Activated B cell treated with CpG ODN at 0.5 μM for 24 hours (primary cell): ENCODE measurements at regions of chr19 and their contacts with region 1.

Region 1: DNA sequence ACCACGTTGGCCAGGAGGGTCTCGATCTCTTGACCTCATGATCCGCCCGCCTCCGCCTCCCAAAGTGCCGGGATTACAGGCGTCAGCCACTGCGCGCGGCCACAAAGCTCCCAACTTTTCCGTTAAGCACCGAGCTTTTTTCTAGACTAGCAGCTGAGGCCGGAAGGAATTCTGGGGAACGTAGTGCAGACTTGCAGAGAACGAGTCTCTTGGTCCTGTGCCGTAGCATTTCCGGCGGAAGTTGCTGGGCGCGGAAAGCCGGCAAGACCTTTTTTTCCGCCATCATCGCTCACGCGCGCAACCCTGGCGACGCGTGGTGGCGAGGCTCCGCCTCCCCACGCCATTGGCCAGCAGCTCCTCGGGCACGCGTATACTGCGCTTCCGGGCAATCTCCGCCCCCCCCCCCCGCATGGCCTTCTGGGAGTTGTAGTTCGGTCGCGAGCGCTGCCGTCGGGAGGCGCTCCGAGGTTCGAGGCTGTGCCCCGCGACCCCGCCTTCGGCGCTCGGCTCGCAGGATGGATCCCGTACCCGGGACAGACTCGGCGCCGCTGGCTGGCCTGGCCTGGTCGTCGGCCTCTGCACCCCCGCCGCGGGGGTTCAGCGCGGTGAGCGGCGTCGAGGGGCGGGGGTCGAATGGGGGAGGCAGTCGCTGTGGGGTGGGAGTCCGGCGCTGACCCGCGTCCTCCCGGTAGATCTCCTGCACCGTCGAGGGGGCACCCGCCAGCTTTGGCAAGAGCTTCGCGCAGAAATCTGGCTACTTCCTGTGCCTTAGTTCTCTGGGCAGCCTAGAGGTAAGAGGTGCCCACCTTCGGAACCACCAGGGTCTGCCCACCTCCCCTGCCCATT is at the start of gene MVB12A:
- DNase-seq: peak; percentile 91
- ATAC-seq: peak; percentile 97
- H3K4me3 Mint-ChIP-seq: peak within 1 kb of the TSS; percentile 95
- H3K27ac Mint-ChIP-seq: peak within 1 kb of the TSS; percentile 93
- H3K4me1 Mint-ChIP-seq: peaks cover 16% of the 10 kb centered on the region
- H3K27me3 Mint-ChIP-seq: no peaks in the 10 kb centered on the region
- CTCF ChIP-seq: no peak
- total RNA-seq, gene MVB12A: 22.8 and 23.3 TPM in 2 replicates

Region 2: GRCh38 chr19:17336872-17337722 is 82.7 kb before region 1 on chr19 and contains the start of gene GTPBP3:
- CTCF ChIA-PET with region 1: no interaction called
- POLR2A ChIA-PET with region 1: interaction called, 5 read pairs
- intact Hi-C with region 1: loop called (anchors 1 kb)
- DNase-seq: peak; percentile 87
- ATAC-seq: peak; percentile 88
- H3K4me3 Mint-ChIP-seq: peak within 1 kb of the TSS; percentile 90
- H3K27ac Mint-ChIP-seq: peak within 1 kb of the TSS; percentile 89
- H3K4me1 Mint-ChIP-seq: peaks cover 36% of the 10 kb centered on the region
- H3K27me3 Mint-ChIP-seq: no peaks in the 10 kb centered on the region
- CTCF ChIP-seq: no peak
- total RNA-seq, gene GTPBP3: 32.4 and 40.2 TPM in 2 replicates

Region 3: DNA sequence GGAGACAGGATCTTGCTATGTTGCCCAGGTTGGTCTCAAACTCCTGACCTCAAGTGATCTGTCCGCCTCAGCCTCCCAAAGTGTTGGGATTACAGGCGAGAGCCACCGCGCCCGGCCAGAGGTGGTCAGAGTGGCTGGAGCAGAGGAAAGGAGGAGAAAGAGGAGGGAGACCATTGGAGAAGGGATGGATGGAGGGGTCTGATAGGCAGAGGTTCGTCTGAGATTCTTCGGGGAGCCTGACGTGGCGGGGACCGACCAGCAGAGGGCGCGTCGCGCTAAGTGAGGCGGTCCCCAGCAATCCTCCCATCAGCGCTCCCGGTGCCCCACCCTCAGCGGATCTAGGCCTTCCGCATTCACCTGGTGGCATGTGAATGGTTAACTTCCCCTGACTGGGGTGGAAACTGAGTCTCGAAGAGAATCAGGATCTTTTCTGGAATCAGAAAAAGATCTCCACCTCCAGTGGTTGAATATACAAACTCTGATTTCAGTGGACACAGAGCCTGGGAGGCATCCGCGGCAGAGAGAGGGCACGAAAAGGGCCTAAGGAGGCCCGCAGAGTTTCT is 73.7 kb before region 1 on chr19:
- CTCF ChIA-PET with region 1: no interaction called
- POLR2A ChIA-PET with region 1: no interaction called
- intact Hi-C with region 1: loop called (anchors 1 kb)
- DNase-seq: peak; percentile 79
- ATAC-seq: peak; percentile 98
- H3K4me3 Mint-ChIP-seq: no peak overlapping the region
- H3K27ac Mint-ChIP-seq: no peak overlapping the region
- H3K4me1 Mint-ChIP-seq: peaks cover 6% of the 10 kb centered on the region
- H3K27me3 Mint-ChIP-seq: peaks cover 15% of the 10 kb centered on the region
- CTCF ChIP-seq: peak; percentile 84

Region 4: GRCh38 chr19:17405250-17406038 is 14.4 kb before region 1 on chr19 and contains the start of gene BST2:
- CTCF ChIA-PET with region 1: interaction called, 5 read pairs
- POLR2A ChIA-PET with region 1: interaction called, 60 read pairs
- intact Hi-C with region 1: loop called (anchors 1 kb)
- DNase-seq: peak; percentile 42
- ATAC-seq: peak; percentile 86
- H3K4me3 Mint-ChIP-seq: peak within 1 kb of the TSS; percentile 92
- H3K27ac Mint-ChIP-seq: peak within 1 kb of the TSS; percentile 93
- H3K4me1 Mint-ChIP-seq: peaks cover 49% of the 10 kb centered on the region
- H3K27me3 Mint-ChIP-seq: no peaks in the 10 kb centered on the region
- CTCF ChIP-seq: no peak
- total RNA-seq, gene BST2: 120 and 121 TPM in 2 replicates

Region 5: DNA sequence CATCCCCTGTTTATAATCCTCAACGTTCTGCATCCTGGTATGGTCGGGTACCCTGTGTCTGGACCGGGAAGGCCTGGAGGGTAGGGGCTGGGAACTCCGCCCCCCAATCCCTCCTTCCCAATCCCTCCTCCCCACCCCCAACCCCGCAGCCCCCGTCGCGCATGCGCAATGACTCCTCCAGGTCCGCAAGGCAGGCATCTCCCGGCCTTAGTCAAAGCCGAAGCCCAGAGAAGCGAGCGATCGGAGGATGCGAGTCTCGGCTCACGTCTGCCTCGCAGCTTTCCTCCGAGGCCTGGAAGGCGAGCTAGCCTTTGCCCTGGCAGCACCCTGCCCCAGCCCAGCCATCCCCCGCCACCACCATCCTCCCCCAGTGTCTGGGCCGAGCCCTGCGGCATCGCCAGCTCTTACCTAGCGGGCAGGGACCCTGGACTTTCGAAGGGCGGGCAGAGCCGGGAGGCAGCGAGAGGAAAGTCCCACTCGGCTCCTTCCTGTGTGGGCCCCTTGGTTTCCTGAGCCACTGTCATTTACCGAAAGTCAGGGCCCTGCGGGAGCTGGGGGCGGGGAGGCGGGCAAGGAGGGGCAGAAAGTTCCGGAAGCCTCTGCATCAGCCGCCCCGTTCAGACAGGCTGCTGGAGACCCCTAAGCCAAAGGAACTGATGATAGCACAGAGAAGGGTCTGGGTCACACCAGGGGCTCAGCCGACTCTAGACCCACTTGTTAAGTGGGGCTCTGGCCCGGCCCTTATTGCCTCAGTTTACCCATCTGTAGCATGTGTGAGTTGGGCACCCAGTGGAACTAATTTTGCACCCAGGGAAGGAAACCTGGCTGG is 427.9 kb after region 1 on chr19 and contains the start of gene JAK3:
- CTCF ChIA-PET with region 1: no interaction called
- POLR2A ChIA-PET with region 1: interaction called, 10 read pairs
- intact Hi-C with region 1: no loop called
- DNase-seq: peak; percentile 79
- ATAC-seq: peak; percentile 86
- H3K4me3 Mint-ChIP-seq: peak within 1 kb of the TSS; percentile 94
- H3K27ac Mint-ChIP-seq: peak within 1 kb of the TSS; percentile 96
- H3K4me1 Mint-ChIP-seq: peaks cover 73% of the 10 kb centered on the region
- H3K27me3 Mint-ChIP-seq: no peaks in the 10 kb centered on the region
- CTCF ChIP-seq: no peak
- total RNA-seq, gene JAK3: 213 and 256 TPM in 2 replicates